Naive thymus-derived CD8-positive, alpha-beta T cell (primary cell): ENCODE measurements at regions of chr5 and their contacts with region 1.

Region 1: DNA sequence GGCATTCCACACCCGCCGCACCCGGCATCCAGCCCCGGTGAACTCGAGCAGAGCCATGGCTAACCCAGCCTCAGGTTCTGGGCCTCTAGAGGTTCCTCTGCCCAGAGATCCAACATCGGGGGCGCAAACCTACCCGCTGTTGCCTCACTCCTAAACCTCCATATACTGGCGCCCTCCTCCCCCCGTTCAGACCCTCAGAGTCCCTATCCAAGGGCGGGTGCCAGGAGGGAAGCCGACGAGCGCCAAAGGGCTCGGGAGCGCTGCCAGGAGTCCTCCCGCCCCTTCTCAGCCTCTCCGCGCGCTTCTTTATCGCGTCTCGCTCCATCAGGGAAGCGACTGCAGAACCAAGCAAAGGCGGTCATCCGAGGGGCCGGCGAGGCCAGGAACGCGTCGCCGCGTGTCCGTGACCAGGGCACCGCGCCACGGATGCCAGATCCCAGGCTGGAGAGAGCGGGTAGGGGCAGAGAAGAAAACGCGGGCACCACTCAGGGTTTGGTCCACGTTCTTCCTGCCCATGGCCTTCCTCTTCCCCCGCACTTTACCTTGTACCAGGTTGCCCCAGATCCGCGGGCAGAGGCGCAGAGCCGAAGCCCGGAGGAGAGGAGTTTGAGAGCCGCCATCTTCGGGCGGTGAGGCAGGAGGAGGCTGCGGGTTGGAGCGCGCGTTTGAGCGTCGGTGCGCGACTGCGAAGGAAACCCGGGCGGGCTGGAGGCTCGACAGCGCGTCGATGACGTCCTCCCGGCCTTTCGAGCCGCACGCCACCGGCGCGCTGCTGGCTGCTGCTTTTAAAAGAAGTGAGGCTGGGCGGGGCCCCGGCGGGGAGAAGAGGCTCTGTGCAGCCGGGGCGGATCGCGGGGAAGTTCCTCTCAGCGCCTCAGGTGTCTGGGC is at the start of gene OXCT1:
- DNase-seq: peak; percentile 82 to 97 (median 93)
- ATAC-seq: peak; percentile 93 to 94
- H3K4me3 Mint-ChIP-seq: peak within 1 kb of the TSS; percentile 86 to 94 (median 90)
- H3K27ac Mint-ChIP-seq: peak within 1 kb of the TSS; percentile 90 to 99 (median 96)
- H3K4me1 Mint-ChIP-seq: peaks cover 27 to 58% (median 48%) of the 10 kb centered on the region in 4 donors
- H3K27me3 Mint-ChIP-seq: no peaks in the 10 kb centered on the region
- polyA plus RNA-seq, gene OXCT1: 24.5 to 27.1 (median 25.1) TPM

Region 2: DNA sequence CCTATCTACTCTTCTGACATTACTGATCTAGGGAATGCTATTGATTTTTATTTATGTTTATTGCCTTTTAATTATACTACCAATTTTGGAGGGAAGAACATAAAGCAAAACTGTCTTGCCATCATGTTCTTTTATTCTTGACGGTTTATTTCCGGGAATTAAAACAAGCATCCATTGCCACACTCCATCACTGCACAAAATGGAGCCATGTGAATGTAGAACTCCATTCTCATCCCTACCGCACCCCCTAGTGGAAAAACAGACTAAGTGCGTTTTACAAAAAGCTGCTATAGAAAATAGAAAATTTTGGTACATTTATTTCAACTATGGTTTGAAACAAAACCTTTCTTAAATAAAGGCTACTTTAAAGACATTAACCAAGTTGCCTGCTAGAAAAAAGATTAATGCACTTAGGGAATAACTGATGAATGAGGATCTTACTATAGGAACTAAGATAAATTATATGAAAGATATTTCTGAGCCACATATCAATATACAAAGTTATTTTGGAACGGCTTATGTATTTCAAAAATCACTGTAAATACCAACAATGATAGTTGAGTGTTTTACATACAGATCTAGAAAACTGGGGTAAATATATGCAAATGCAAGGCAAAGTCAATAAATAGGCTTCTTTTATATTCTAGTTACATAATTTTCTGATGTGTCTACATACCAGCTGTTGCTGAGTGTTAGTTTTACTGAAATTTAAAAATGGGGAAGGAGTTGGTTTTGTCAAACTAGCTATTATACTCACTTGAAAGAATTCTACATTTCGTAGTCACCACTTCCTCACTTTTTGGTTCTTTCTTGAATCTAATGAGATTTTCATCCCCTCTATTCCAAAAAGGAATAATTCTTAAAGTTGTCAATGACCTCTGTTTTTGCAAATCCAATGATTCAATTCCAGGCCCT is 26.3 kb before region 1 on chr5:
- POLR2A ChIA-PET with region 1: no interaction called
- DNase-seq: peak in 4 of 10 donors; percentile 6 to 44 (median 40)
- ATAC-seq: peak; percentile 52 to 54
- H3K4me3 Mint-ChIP-seq: no peak overlapping the region
- H3K27ac Mint-ChIP-seq: no peak overlapping the region
- H3K4me1 Mint-ChIP-seq: peaks cover 0 to 2% (median 0%) of the 10 kb centered on the region in 4 donors
- H3K27me3 Mint-ChIP-seq: no peaks in the 10 kb centered on the region

Region 3: DNA sequence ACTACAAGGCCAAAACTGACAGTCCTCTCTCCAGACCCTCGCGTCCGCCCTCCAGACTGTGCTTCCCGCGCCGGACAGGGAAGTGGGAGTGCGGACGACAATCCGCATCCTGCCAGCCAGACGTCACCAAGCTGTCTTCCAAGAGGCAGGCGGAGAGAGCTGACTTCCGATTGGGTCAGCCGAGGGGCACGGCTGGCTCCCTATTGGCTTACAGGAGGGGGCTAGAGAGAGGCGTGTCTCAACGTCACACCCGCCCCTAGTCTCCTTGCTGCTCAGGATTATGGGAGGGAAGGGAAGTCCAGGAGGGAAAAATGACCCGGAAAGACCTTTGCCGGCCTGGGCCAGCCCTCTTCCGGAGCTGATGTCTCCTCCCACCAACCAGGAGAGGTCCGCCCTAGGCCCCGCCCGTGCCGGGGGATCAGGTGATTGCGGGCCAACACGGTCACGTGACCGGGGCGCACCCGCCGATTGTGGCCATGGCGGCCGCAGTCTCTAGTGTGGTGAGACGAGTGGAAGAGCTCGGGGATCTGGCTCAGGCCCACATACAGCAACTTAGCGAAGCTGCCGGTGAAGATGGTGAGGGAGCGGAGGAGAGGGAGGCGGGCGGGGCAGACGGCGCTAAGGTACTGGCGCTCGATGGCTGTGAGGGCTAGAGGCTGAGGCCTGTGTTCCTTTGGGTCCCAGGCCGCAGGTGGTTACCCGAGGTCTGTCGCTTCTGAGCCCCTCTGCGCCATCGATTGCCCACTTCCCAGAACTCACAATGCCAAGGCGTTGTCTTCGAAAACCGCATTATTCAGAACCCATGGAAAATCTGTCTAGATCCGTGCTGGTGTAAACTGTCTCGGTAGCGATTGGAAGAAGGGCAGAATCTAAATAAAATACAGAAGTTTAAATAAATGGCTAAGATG is 34.2 kb after region 1 on chr5 and contains the start of gene RIMOC1:
- POLR2A ChIA-PET with region 1: interaction called, 37 read pairs
- DNase-seq: peak; percentile 91 to 99 (median 96)
- ATAC-seq: peak; percentile 87 to 88
- H3K4me3 Mint-ChIP-seq: peak within 1 kb of the TSS; percentile 88 to 100 (median 98)
- H3K27ac Mint-ChIP-seq: peak within 1 kb of the TSS; percentile 95 to 100 (median 98)
- H3K4me1 Mint-ChIP-seq: peaks cover 12 to 46% (median 39%) of the 10 kb centered on the region in 4 donors
- H3K27me3 Mint-ChIP-seq: peaks cover 0 to 5% (median 0%) of the 10 kb centered on the region in 5 donors
- polyA plus RNA-seq, gene RIMOC1: 8.5 to 15.2 (median 9.5) TPM

Region 4: DNA sequence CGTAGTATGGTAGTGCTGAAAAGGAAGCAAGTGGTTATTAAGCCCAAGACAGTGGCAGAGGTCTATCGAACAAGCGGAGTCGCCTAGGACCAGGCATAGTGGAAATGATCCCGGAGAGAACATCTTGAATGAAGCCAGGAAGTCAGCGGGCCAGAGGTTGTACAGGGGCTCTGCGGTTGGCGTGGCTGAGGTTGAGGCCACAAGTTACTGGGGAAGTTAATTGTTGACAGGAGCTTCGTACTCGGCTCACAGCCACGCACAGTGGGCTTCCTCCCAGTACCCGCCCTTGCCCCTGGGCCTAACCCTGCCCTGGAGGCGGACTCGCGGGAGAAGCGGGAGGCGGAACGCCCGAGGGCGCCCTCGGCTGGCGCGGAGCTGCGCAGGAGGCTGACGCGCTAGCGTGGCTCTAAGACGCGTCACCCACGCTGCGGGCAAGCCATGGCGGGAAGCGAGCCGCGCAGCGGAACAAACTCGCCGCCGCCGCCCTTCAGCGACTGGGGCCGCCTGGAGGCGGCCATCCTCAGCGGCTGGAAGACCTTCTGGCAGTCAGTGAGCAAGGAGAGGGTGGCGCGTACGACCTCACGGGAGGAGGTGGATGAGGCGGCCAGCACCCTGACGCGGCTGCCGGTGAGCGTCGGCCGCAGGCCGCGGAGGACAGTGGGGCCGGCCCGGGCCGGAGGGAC is 55.0 kb after region 1 on chr5 and contains the start of gene FBXO4:
- POLR2A ChIA-PET with region 1: interaction called, 18 read pairs
- DNase-seq: peak; percentile 79 to 93 (median 89)
- ATAC-seq: peak; percentile 92 to 96
- H3K4me3 Mint-ChIP-seq: peak within 1 kb of the TSS; percentile 81 to 96 (median 84)
- H3K27ac Mint-ChIP-seq: peak within 1 kb of the TSS; percentile 94 to 99 (median 96)
- H3K4me1 Mint-ChIP-seq: peaks cover 8 to 36% (median 23%) of the 10 kb centered on the region in 4 donors
- H3K27me3 Mint-ChIP-seq: no peaks in the 10 kb centered on the region
- polyA plus RNA-seq, gene FBXO4: 17.5 to 22.4 (median 19.6) TPM